Vagina (tissue), 2 donors: ENCODE measurements at regions of chr7 and their contacts with region 1.

Region 1: GRCh38 chr7:116525913-116526861 is 1.4 kb downstream of the CAV1 start:
- DNase-seq: peak in 1 of 2 donors; percentile 90
- H3K4me3 ChIP-seq: peak overlapping the region; percentile 80 to 92
- H3K27ac ChIP-seq: peak overlapping the region; percentile 98
- H3K4me1 ChIP-seq: peaks cover 55% of the 10 kb centered on the region
- H3K27me3 ChIP-seq: no peaks in the 10 kb centered on the region
- CTCF ChIP-seq: peak; percentile 43 to 85 (median 55)
- POLR2A ChIP-seq: peak in 1 of 2 donors; percentile 51

Region 2: GRCh38 chr7:116180302-116180701 is 345.9 kb before region 1 on chr7:
- intact Hi-C with region 1: no loop called
- DNase-seq: no peak
- H3K4me3 ChIP-seq: no peak overlapping the region
- H3K27ac ChIP-seq: no peak overlapping the region
- H3K4me1 ChIP-seq: no peaks in the 10 kb centered on the region
- H3K27me3 ChIP-seq: no peaks in the 10 kb centered on the region
- CTCF ChIP-seq: peak; percentile 49 to 84 (median 75)
- POLR2A ChIP-seq: no peak

Region 3: DNA sequence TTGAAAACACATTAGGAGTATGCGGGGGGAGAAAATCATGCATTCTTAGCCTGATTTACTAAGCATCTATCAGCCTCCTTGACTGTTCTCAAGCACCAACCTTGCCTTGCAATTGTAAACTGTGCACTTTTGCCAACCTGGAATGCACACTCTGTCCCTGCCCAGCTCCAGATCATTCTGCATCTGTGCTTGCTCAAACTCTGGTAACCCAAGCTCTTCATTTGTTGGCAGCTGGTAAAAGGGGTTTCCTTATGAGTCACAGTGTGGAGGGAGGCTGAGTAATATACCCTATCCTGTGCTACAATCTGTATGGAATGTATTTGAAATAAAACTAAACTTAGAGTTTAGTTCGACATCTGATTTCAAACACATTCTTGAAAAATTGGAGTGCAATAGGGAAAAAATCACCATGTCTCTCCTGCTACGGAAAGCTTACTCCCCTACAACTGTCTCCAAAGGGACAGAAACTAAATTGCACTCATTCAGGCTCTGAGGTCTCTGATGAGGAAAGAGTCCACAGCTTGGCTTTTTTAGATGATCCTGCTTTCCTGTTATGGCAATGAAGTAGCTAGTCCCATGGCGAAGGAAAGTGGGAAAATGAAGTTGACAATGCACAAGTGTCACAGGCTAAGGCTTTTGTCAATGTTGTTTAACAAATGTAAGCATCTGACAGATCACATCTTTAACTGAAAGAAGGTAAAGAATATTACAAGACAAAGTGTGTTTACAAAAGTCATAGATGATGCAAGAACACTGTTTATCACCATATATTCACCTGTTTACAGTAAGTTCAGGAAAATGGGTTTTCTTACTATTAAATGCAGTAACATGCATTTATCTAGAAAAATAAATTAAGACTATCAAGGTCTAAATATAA is 254.0 kb before region 1 on chr7:
- intact Hi-C with region 1: loop called (anchors 2 kb)
- DNase-seq: no peak
- H3K4me3 ChIP-seq: peak overlapping the region in 1 of 2 donors; percentile 11
- H3K27ac ChIP-seq: peak overlapping the region; percentile 31
- H3K4me1 ChIP-seq: peaks cover 27% of the 10 kb centered on the region
- H3K27me3 ChIP-seq: no peaks in the 10 kb centered on the region
- CTCF ChIP-seq: no peak
- POLR2A ChIP-seq: no peak

Region 4: GRCh38 chr7:116455009-116455408 is 71.2 kb before region 1 on chr7:
- intact Hi-C with region 1: no loop called
- DNase-seq: no peak
- H3K4me3 ChIP-seq: no peak overlapping the region
- H3K27ac ChIP-seq: no peak overlapping the region
- H3K4me1 ChIP-seq: no peaks in the 10 kb centered on the region
- H3K27me3 ChIP-seq: no peaks in the 10 kb centered on the region
- CTCF ChIP-seq: no peak
- POLR2A ChIP-seq: no peak

Region 5: DNA sequence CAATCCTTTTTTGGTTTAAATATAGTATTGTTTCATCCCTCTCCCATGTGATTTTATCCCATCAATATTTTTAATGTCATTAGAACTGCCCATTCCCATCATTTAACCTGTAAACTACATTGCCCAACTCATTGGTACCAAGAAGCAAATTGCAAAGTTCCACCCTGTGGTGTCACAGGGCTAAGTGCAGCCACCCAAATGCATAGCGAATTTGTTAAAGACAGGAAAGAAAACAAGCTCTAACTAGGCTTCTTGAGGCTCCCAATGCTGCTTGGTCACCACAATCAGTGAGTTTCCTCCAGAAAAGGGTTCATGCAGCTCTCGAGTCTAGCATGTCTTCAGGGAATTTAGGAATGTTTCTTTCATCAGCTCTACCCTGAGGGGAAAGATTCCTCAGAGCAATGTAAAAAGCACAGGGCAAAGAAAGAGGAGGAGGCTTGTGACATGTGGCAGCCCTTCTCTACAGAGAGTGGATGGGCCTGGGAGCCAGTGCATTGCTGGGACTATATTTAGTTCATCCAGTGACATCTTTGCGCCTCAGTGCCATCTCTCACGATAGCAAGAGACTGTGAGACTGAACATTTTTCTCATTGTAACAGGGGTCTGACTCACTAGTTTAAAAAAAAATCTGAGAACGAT is 56.7 kb after region 1 on chr7:
- intact Hi-C with region 1: loop called (anchors 5 kb)
- DNase-seq: no peak
- H3K4me3 ChIP-seq: no peak overlapping the region
- H3K27ac ChIP-seq: peak overlapping the region; percentile 3
- H3K4me1 ChIP-seq: peaks cover 26% of the 10 kb centered on the region
- H3K27me3 ChIP-seq: no peaks in the 10 kb centered on the region
- CTCF ChIP-seq: peak in 1 of 3 experiments; percentile 5
- POLR2A ChIP-seq: no peak